ENCODE measurements at regions of chr15 and their contacts with region 1.

Region 1: GRCh38 chr15:56835718-56836171 is 82.7 kb upstream of the TCF12 start:
- DNase-seq: no peak
- H3K4me3 ChIP-seq: no peak overlapping the region
- H3K27ac ChIP-seq: no peak overlapping the region
- H3K4me1 ChIP-seq: peaks cover 0 to 43% (median 31%) of the 10 kb centered on the region in 4 donors
- H3K27me3 ChIP-seq: no peaks in the 10 kb centered on the region
- CTCF ChIP-seq: no peak
- EP300 ChIP-seq: no peak
- POLR2A ChIP-seq: no peak

Region 2: DNA sequence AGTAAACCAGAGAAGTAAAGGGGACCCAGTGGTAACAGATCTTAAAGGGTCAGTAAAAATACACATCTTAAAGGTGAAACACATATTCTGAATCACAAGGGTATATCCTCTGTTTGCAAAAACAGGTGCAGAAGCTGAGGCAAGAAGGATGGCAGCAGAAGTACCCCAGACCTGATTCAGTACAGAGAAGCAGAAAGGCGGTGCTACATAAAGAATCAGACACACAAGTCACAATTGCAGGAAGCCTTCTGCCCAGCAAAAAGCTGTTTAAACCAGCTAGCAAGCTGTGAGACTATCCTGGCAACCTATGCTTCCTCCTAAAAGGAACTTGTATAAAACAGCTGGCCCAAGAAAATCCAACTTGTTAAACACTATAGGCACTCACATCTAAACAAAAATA is 151.8 kb before region 1 on chr15:
- intact Hi-C with region 1: no loop called
- DNase-seq: no peak
- H3K4me3 ChIP-seq: no peak overlapping the region
- H3K27ac ChIP-seq: no peak overlapping the region
- H3K4me1 ChIP-seq: peaks cover 4 to 23% (median 19%) of the 10 kb centered on the region in 4 donors
- H3K27me3 ChIP-seq: no peaks in the 10 kb centered on the region
- CTCF ChIP-seq: no peak
- EP300 ChIP-seq: no peak
- POLR2A ChIP-seq: no peak

Region 3: DNA sequence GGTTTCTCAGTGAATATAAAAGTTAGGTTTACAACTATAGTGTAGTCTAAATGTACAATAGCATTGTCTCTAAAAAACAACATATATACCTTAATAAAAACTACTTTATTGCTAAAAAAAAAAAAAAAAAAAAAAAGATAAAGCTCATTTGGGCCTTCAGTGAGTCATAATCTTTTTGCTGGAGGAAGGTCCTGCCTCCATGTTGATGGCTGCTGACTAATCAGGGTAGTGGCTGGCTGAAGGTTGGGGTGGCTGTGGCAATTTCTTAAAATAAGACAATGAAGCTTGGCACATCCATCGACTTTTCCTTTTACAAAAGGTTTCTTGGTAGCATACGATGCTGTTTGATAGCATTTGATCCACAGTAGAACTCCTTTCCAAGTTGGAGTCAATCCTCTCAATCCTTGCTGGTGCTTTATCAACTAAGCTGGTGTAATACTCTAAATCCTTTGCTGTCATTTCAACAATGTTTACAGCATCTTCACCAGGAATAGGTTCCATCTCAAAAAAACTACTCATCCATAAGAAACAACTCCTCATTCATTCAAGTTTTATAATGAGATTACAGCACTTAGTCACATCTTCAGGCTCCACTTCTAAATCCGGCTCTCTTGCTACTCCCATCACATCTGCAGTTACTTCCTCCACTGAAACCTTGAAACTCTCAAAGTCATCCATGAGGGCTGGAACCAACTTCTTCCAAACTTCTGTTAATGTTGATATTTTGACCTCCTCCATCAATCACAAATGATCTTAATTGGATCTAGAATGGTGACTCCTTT is 115.8 kb before region 1 on chr15:
- intact Hi-C with region 1: loop called (anchors 10 kb)
- DNase-seq: no peak
- H3K4me3 ChIP-seq: no peak overlapping the region
- H3K27ac ChIP-seq: no peak overlapping the region
- H3K4me1 ChIP-seq: peaks cover 17 to 51% (median 46%) of the 10 kb centered on the region in 4 donors
- H3K27me3 ChIP-seq: no peaks in the 10 kb centered on the region
- CTCF ChIP-seq: no peak
- EP300 ChIP-seq: no peak
- POLR2A ChIP-seq: no peak

Measured in esophagus muscularis mucosa (tissue), 4 donors.